Endothelial cell of umbilical vein (primary cell): ENCODE measurements at regions of chr18 and their contacts with region 1.

Region 1: DNA sequence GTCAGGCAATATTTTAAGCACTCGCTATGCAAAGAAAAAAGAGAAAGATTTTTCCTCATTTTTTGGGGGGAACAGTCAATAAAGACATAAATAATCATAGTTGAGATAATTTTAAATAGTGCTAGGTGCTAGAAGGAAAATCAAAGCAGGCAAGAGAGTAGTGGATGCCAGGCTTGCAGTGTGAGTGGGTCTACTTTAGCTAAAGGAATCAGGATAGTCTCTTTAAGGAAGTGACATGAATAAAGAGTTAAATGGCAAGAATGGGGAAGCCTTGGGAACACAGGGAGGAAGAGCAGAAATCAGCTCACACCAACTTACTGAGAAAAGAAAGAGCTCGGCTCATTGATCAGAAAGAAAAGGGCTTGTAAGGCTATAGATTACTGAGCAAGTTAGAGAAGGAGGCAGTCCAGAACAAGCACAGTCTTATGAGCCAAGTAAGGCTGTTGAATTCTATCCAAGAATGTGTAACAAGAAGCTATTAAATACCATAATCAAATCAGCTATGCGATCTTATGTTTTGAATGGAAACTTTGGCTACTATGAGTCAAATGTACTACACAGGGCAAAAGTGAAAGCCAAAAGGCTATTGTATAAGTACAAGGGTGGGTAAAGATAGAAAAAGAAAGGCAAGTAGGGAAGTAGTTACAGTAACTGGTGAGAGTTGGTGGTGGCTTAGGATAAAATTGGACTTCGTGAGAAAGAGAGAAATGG is 833.8 kb upstream of the PIK3C3 start:
- DNase-seq: peak; percentile 78
- H3K4me3 ChIP-seq: no peak overlapping the region
- H3K27ac ChIP-seq: no peak overlapping the region
- H3K4me1 ChIP-seq: no peaks in the 10 kb centered on the region
- H3K27me3 ChIP-seq: no peaks in the 10 kb centered on the region
- CTCF ChIP-seq: no peak
- POLR2A ChIP-seq: no peak

Region 2: DNA sequence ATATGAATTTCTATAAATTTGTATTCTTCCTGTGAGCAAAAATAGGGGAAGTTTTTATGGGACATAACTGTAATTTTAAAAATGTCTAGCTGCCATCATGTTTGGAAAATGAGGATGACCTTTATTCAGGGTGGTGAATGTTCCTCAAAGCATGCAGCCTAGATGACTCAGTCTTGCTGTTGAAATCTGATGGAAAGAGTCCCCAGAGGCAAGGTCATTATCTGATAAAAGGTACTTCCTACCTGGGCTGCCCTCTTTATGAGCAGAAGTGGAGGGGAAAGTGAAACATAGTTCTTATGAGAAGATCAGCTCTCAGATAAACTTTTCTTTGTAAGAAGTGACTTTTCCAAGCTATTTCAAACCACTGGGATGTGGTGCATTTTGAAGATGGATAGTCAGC is 310.9 kb before region 1 on chr18:
- CTCF ChIA-PET with region 1: no interaction called
- POLR2A ChIA-PET with region 1: no interaction called
- dilution Hi-C with region 1: no loop called
- intact Hi-C with region 1: no loop called
- DNase-seq: no peak
- H3K4me3 ChIP-seq: no peak overlapping the region
- H3K27ac ChIP-seq: no peak overlapping the region
- H3K4me1 ChIP-seq: no peaks in the 10 kb centered on the region
- H3K27me3 ChIP-seq: no peaks in the 10 kb centered on the region
- CTCF ChIP-seq: no peak
- POLR2A ChIP-seq: no peak

Region 3: DNA sequence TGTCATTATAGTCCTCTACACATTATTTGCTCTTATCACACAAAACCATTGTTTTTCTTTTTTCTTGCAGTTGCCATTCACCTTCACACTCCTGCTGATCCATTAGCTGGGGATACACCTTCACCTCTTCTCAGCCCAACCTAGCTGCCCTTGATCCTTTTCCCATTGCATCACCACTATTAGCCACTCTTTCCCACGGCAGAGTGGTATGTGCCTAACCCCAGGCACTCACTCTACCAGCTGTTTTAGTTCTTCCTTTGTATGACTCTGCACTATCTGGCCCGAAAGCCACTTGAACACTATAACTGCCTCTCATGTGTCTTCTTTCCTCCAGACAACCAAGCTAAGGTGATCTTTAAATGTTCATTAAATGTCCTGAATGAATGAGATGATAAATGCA is 688.4 kb after region 1 on chr18:
- CTCF ChIA-PET with region 1: no interaction called
- POLR2A ChIA-PET with region 1: no interaction called
- dilution Hi-C with region 1: no loop called
- intact Hi-C with region 1: loop called (anchors 5 kb)
- DNase-seq: no peak
- H3K4me3 ChIP-seq: no peak overlapping the region
- H3K27ac ChIP-seq: no peak overlapping the region
- H3K4me1 ChIP-seq: no peaks in the 10 kb centered on the region
- H3K27me3 ChIP-seq: no peaks in the 10 kb centered on the region
- CTCF ChIP-seq: no peak
- POLR2A ChIP-seq: no peak